Activated B cell treated with CpG ODN at 0.5 μM for 24 hours (primary cell): ENCODE measurements at regions of chr4 and their contacts with region 1.

Region 1: DNA sequence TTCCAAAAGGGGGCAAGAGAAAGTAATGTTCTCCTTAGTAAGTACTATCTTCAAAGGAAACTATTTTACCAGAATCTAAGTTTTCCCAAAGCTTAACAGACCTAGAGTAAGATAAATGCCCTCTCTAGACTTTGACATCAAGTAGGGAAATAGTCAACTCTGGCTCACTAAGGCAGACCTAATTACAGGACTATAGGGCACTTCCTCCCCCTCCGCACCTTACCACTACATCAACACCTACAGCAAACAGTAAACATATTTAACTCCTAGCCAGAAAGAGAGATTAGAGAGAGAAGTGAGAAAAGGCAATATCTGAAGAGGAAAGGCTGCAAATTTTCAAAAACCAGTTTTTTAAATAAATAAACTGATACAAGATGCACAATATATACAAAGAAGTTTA is 60.4 kb downstream of the CNOT6L start:
- DNase-seq: no peak
- ATAC-seq: no peak
- H3K4me3 Mint-ChIP-seq: no peak overlapping the region
- H3K27ac Mint-ChIP-seq: no peak overlapping the region
- H3K4me1 Mint-ChIP-seq: no peaks in the 10 kb centered on the region
- H3K27me3 Mint-ChIP-seq: no peaks in the 10 kb centered on the region
- CTCF ChIP-seq: no peak

Region 2: DNA sequence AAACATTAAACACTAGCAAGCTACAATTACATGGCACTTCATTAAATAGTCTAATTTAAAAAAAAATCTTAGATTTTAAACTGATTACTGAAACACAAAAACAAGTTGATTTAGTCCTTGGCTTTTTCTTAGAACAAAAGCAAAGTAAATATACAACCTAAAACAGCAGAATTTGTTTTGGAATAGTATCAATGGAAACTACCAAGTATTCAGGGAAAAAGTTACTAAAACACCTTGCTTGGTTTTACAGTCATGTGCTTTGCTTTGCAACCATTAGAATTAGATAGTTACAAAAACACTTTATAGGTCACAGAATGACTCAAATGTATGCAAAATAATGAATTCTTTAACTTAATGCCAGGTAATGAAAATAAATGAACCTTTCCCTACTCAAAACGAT is 44.9 kb before region 1 on chr4:
- CTCF ChIA-PET with region 1: no interaction called
- POLR2A ChIA-PET with region 1: interaction called, 10 read pairs
- intact Hi-C with region 1: no loop called
- DNase-seq: no peak
- ATAC-seq: no peak
- H3K4me3 Mint-ChIP-seq: no peak overlapping the region
- H3K27ac Mint-ChIP-seq: no peak overlapping the region
- H3K4me1 Mint-ChIP-seq: no peaks in the 10 kb centered on the region
- H3K27me3 Mint-ChIP-seq: no peaks in the 10 kb centered on the region
- CTCF ChIP-seq: no peak

Region 3: GRCh38 chr4:77742054-77742453 is 16.8 kb before region 1 on chr4:
- CTCF ChIA-PET with region 1: no interaction called
- POLR2A ChIA-PET with region 1: no interaction called
- intact Hi-C with region 1: no loop called
- DNase-seq: no peak
- ATAC-seq: no peak
- H3K4me3 Mint-ChIP-seq: no peak overlapping the region
- H3K27ac Mint-ChIP-seq: no peak overlapping the region
- H3K4me1 Mint-ChIP-seq: peaks cover 3% of the 10 kb centered on the region
- H3K27me3 Mint-ChIP-seq: no peaks in the 10 kb centered on the region
- CTCF ChIP-seq: no peak

Region 4: DNA sequence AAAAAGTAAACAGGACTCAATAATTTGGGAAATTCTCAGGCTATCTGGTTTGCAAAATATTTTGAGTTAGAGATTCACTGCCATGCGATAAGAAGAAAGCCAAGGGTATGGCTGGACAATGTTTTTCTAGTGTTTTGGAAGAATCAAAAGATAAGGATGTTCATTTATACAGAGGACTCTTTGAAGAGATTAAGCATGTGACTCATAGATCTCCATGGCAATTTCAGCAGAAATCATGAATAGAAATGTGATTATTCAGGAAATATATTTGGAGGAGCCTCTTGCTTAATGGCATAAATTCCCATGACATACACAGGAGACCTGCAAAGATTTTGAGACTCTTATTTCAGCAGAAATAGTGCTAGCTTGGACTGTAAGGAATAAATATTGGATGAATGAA is 281.6 kb after region 1 on chr4:
- CTCF ChIA-PET with region 1: no interaction called
- POLR2A ChIA-PET with region 1: no interaction called
- intact Hi-C with region 1: no loop called
- DNase-seq: no peak
- ATAC-seq: no peak
- H3K4me3 Mint-ChIP-seq: no peak overlapping the region
- H3K27ac Mint-ChIP-seq: no peak overlapping the region
- H3K4me1 Mint-ChIP-seq: no peaks in the 10 kb centered on the region
- H3K27me3 Mint-ChIP-seq: peaks cover 3% of the 10 kb centered on the region
- CTCF ChIP-seq: no peak

Region 5: GRCh38 chr4:79185526-79186045 is 1426.8 kb after region 1 on chr4:
- CTCF ChIA-PET with region 1: no interaction called
- POLR2A ChIA-PET with region 1: no interaction called
- intact Hi-C with region 1: no loop called
- DNase-seq: no peak
- ATAC-seq: no peak
- H3K4me3 Mint-ChIP-seq: no peak overlapping the region
- H3K27ac Mint-ChIP-seq: no peak overlapping the region
- H3K4me1 Mint-ChIP-seq: no peaks in the 10 kb centered on the region
- H3K27me3 Mint-ChIP-seq: no peaks in the 10 kb centered on the region
- CTCF ChIP-seq: no peak